K562 (cell line): ENCODE measurements at regions of chr5 and their contacts with region 1.

Region 1: GRCh38 chr5:36875790-36876388 is 680 bp upstream of the NIPBL start:
- DNase-seq: peak; percentile 72 to 90 (median 78)
- ATAC-seq: peak; percentile 73
- H3K4me3 ChIP-seq: peak overlapping the region; percentile 93
- H3K27ac ChIP-seq: peak overlapping the region; percentile 93
- H3K4me1 ChIP-seq: peaks cover 9 to 10% of the 10 kb centered on the region in 2 experiments; a peak in 4 of 5 replicates
- H3K27me3 ChIP-seq: no peaks in the 10 kb centered on the region
- CTCF ChIP-seq: peak; percentile 71 to 82 (median 82)
- EP300 ChIP-seq: no peak; the same call in 1 of the 2 replicates
- POLR2A ChIP-seq: 0 out of 2 replicates have a peak, but pooled peaks have one; percentile 20
- RAD21 ChIP-seq: peak; percentile 53 to 64; a peak in 3 of 4 replicates

Region 2: DNA sequence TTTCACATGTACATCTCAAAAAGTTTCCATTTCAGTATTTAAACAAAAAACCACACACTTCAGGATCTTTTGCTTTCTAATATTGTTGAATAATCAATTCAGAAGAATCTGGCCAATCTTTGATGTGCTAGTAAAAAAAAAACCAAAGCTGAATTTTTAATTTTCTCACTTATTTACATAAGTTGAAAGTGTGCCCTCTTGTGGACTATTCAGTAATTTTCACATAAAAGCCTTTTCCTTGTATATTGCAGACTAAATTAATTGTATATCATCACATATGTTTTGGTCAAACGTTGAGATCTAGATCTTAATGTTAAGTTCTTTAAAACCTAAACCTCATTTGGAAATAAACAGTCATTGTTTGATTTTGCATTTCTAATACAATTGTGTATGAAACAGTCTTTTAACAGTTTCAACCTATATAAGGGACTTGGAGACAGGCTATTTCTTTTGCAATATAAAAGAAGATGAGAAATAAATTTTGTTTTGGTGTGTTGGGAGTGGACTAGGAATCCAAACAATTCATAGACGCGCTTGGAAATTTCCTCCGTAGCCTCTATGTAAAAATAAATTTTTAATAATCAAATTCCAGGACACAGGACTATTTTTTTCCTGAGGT is 68.8 kb after region 1 on chr5:
- CTCF ChIA-PET with region 1: interaction called, 3 read pairs
- POLR2A ChIA-PET with region 1: interaction called, 4 read pairs
- in situ Hi-C with region 1: no loop called
- intact Hi-C with region 1: loop called (anchors 2 kb)
- DNase-seq: peak; percentile 12 to 67 (median 20)
- ATAC-seq: peak; percentile 46; the same call in 1 of the 3 replicates
- H3K4me3 ChIP-seq: no peak overlapping the region
- H3K27ac ChIP-seq: no peak overlapping the region
- H3K4me1 ChIP-seq: no peaks in the 10 kb centered on the region
- H3K27me3 ChIP-seq: no peaks in the 10 kb centered on the region
- CTCF ChIP-seq: peak in 2 of 3 experiments; percentile 41 to 63; a peak in 4 of 6 replicates
- EP300 ChIP-seq: no peak
- POLR2A ChIP-seq: no peak
- RAD21 ChIP-seq: peak; percentile 35 to 46

Region 3: DNA sequence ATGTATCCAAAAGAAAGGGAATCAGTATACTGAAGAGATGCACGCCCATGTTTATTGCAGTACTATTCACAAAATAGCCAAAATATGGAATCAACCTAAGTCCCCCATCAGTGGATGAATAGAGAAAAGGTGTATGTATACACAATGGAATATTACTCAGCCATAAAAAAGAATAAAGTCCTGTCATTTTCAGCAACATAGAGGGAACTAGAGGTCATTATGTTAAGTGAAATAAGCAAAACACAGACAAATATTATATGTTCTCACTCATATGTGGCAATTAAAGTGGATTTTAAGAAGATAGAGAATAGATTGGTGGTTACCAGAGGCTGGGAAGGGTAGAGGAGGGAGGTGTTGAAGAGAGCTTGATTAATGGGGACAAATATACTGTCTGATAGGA is 89.3 kb after region 1 on chr5:
- CTCF ChIA-PET with region 1: interaction called, 12 read pairs
- POLR2A ChIA-PET with region 1: no interaction called
- in situ Hi-C with region 1: no loop called
- intact Hi-C with region 1: no loop called
- DNase-seq: no peak
- ATAC-seq: no peak
- H3K4me3 ChIP-seq: no peak overlapping the region
- H3K27ac ChIP-seq: no peak overlapping the region
- H3K4me1 ChIP-seq: no peaks in the 10 kb centered on the region
- H3K27me3 ChIP-seq: no peaks in the 10 kb centered on the region
- CTCF ChIP-seq: no peak
- EP300 ChIP-seq: no peak
- POLR2A ChIP-seq: no peak
- RAD21 ChIP-seq: no peak

Region 4: GRCh38 chr5:37370864-37371726 is 495.2 kb after region 1 on chr5 and contains the start of gene NUP155:
- CTCF ChIA-PET with region 1: no interaction called
- POLR2A ChIA-PET with region 1: no interaction called
- in situ Hi-C with region 1: no loop called
- intact Hi-C with region 1: loop called (anchors 10 kb)
- DNase-seq: peak; percentile 96 to 99 (median 96)
- ATAC-seq: peak; percentile 95
- H3K4me3 ChIP-seq: peak within 1 kb of the TSS; percentile 89
- H3K27ac ChIP-seq: peak within 1 kb of the TSS; percentile 85
- H3K4me1 ChIP-seq: peaks cover 8 to 18% of the 10 kb centered on the region in 2 experiments
- H3K27me3 ChIP-seq: no peaks in the 10 kb centered on the region
- CTCF ChIP-seq: 0 out of 6 replicates have a peak, but pooled peaks of 1 of the 3 experiments have one; percentile 2
- EP300 ChIP-seq: 0 out of 2 replicates have a peak, but pooled peaks have one; percentile 6
- POLR2A ChIP-seq: peak; percentile 98
- RAD21 ChIP-seq: 0 out of 4 replicates have a peak, but pooled peaks of 1 of the 2 experiments have one; percentile 7
- polyA plus RNA-seq, gene NUP155: 39.3 to 77.0 TPM